Right ventricle myocardium inferior (tissue), 1 donor: ENCODE measurements at regions of chr7 and their contacts with region 1.

Region 1: DNA sequence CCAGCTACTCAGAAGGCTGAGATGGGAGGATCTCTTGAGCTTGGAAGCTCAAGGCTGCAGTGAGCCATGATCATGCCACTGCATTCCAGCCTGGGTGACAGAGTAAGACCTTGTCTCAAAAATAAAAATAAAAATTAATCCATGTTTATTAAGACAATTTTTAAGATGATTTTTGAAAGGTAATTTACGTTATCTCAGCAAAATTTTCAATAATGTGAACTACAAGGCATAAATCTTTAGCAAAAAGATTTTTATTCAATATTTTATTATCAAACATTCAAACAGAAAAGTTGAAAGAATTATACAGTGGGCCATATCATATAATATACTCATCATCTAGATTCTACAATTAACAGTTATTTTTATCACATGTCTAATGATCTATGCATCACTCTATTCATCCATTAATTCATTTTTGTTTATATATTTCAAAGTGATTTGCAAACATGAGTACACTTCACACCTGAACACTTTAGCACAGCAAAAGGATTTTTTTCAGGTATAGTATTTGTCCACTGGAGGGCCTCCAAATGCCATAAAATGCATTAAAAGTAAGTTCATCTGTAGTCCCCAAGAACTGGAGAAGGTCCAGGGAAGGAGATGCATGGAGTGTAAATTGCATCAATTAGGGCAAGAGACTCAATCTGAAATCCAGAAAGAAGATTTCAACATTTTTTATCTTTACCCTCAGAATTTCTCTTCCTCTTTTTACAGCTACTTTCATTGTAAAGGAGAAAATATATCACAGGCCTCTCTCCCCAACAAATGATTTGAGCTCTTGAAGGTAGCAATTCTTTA is 38.6 kb upstream of the RSBN1L start:
- DNase-seq: no peak
- ATAC-seq: no peak

Region 2: GRCh38 chr7:77696198-77697028 is 38.8 kb after region 1 on chr7 and contains the start of gene RSBN1L:
- intact Hi-C with region 1: loop called (anchors 5 kb)
- DNase-seq: peak; percentile 99
- ATAC-seq: peak; percentile 99
- total RNA-seq, gene RSBN1L: 8.1 TPM

Region 3: DNA sequence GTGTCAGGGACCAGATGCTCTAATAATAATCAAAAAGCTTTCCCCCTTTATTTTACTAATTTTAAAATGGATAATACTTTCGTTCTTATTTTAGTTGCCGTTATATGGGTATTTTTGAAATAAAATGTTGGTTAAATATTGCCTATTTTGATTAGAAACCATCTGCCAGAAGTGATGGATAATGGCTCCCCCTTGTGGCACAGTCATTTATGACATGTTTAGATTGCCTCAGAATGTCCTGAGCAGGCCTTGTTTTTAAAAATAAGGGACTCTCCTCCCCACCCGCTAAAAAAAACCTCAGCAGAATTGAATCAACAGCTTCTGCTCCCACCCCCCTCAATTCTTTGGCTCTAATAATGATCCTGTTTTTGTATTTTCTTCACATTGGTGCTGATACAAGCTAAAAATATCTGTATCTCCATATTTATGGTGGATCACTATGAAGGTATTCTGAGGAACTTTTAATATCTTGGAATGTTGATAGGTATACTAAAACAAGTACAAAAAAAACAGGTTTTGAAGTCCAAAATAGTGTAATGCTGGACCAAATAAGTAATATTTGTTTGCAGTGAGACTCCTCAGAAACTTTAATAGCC is 101.8 kb after region 1 on chr7:
- intact Hi-C with region 1: loop called (anchors 2 kb)
- DNase-seq: no peak
- ATAC-seq: peak; percentile 67

Region 4: DNA sequence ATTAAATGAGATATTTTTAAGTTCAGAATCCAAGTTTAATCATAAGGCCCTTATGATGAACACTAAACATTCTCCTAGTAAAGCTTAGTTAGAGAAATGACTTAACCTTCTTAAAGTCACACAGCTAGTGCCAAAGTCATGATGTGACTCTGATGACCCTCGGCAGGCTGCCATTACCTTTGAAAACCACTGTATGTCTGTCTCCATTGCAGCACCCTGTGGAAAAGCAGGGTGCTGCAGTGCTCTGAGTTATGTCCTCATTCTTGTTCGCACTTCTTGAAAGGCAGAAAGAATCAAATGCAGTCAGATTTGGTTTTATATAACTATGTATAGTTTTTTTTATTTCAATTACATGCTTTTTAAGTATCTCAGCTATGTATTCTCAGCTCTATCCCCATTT is 246.0 kb after region 1 on chr7:
- intact Hi-C with region 1: loop called (anchors 10 kb)
- DNase-seq: no peak
- ATAC-seq: no peak